Caco-2 (cell line): ENCODE measurements at regions of chrX and their contacts with region 1.

Region 1: DNA sequence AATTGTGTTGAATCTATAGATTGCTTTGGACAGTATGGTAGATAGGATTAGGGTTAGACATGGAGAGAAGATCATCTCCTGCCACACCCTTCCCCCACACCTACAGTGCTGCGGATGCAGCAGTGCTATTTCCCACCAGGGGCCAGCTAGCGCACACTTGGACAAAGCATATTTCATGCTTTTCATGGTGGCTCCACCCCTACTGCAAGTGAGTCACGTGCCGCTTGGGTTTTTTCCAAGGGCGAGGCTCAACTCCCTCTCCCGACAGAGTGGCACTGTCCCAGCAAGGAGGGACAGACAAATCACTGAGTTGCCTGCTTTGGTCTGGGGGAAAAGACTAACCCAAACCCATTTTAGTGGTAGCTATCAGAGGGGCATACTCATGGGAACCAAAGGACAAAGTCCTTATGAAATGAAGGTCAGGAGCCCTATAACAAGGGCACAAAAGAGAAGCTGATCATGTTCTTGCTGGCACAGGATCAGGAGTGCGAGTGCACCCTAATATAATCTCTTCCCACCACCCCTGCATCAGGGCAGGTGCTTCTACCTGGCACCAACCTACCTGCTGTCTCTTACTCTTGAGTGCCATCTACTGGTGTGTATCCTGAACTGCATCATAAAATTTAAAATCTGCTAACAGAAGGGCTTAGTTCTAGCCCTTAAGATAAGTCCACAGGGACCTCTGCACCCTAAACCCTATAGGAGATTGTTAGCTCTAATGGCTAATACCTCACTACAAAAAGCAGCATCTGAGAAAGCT is 55.1 kb upstream of the PGAM4 start:
- DNase-seq: peak; percentile 33 to 40
- H3K4me3 ChIP-seq: no peak overlapping the region
- H3K4me3 Mint-ChIP-seq: no peak overlapping the region
- H3K27ac Mint-ChIP-seq: no peak overlapping the region
- H3K4me1 ChIP-seq: no peaks in the 10 kb centered on the region
- H3K4me1 Mint-ChIP-seq: no peaks in the 10 kb centered on the region
- H3K27me3 ChIP-seq: no peaks in the 10 kb centered on the region
- H3K27me3 Mint-ChIP-seq: no peaks in the 10 kb centered on the region
- CTCF ChIP-seq: peak; percentile 42 to 50

Region 2: DNA sequence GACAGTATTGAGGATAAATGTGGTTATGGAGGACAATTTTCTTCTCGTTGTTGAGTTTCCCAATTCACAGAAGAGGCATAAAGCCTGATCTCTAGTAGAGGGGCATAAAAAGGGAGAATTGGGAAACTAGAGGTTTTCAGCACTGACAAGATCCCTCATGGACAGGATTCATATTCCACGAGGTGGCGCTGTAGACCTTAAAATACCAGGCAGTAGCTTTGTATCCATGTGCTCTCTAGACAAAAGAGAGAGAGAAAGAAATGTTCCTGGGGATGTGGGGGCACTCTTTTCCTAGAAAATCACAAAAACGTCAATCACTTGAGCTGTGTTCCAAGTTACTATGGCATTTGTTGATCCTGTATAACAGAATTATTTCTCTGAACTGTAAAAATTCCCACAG is 1468.7 kb before region 1 on chrX:
- CTCF ChIA-PET with region 1: no interaction called
- POLR2A ChIA-PET with region 1: no interaction called
- intact Hi-C with region 1: loop called (anchors 5 kb)
- DNase-seq: peak in 1 of 2 experiments; percentile 14
- H3K4me3 ChIP-seq: no peak overlapping the region
- H3K4me3 Mint-ChIP-seq: no peak overlapping the region
- H3K27ac Mint-ChIP-seq: no peak overlapping the region
- H3K4me1 ChIP-seq: no peaks in the 10 kb centered on the region
- H3K4me1 Mint-ChIP-seq: no peaks in the 10 kb centered on the region
- H3K27me3 ChIP-seq: no peaks in the 10 kb centered on the region
- H3K27me3 Mint-ChIP-seq: no peaks in the 10 kb centered on the region
- CTCF ChIP-seq: no peak